Panc1 (cell line): ENCODE measurements at regions of chr10 and their contacts with region 1.

Region 1: GRCh38 chr10:51524041-51524440 is 175.4 kb downstream of the CSTF2T start:
- DNase-seq: no peak
- ATAC-seq: no peak
- H3K4me3 ChIP-seq: no peak overlapping the region
- H3K27ac ChIP-seq: no peak overlapping the region
- H3K4me1 ChIP-seq: no peaks in the 10 kb centered on the region
- H3K27me3 ChIP-seq: peaks cover 5% of the 10 kb centered on the region; the same call in 1 of the 2 replicates
- CTCF ChIP-seq: no peak

Region 2: GRCh38 chr10:51462076-51462779 is 61.8 kb before region 1 on chr10:
- CTCF ChIA-PET with region 1: no interaction called
- POLR2A ChIA-PET with region 1: no interaction called
- in situ Hi-C with region 1: no loop called
- intact Hi-C with region 1: loop called (anchors 2 kb)
- DNase-seq: no peak
- ATAC-seq: no peak
- H3K4me3 ChIP-seq: no peak overlapping the region
- H3K27ac ChIP-seq: no peak overlapping the region
- H3K4me1 ChIP-seq: no peaks in the 10 kb centered on the region
- H3K27me3 ChIP-seq: no peaks in the 10 kb centered on the region
- CTCF ChIP-seq: no peak

Region 3: DNA sequence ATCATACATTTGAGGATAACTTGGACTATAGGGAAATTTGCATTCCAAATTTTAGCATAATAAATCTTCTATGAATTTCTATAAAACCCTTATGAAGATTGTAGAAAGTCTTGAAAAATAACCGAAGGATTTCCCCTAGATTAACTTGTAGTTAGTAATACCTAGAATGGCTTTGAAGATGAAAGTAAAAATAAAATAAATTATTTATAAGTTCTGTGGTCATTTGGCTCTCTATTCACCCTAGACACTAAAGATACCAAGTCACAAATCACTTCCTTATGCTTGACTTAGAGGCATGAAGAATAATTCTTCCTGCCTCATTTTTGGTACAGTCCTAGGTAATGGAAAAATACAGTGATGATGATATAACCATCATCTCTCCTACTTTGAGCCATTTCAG is 96.1 kb after region 1 on chr10:
- CTCF ChIA-PET with region 1: no interaction called
- POLR2A ChIA-PET with region 1: no interaction called
- in situ Hi-C with region 1: no loop called
- intact Hi-C with region 1: no loop called
- DNase-seq: no peak
- ATAC-seq: no peak
- H3K4me3 ChIP-seq: no peak overlapping the region
- H3K27ac ChIP-seq: no peak overlapping the region
- H3K4me1 ChIP-seq: no peaks in the 10 kb centered on the region
- H3K27me3 ChIP-seq: no peaks in the 10 kb centered on the region
- CTCF ChIP-seq: no peak